Activated CD8-positive, alpha-beta T cell treated with anti-CD3 and anti-CD28 coated beads, Interleukin-2, amount 10 ng/mL, durations not matched to agents 7 days and 5 days (primary cell): ENCODE measurements at regions of chr20 and their contacts with region 1.

Region 1: DNA sequence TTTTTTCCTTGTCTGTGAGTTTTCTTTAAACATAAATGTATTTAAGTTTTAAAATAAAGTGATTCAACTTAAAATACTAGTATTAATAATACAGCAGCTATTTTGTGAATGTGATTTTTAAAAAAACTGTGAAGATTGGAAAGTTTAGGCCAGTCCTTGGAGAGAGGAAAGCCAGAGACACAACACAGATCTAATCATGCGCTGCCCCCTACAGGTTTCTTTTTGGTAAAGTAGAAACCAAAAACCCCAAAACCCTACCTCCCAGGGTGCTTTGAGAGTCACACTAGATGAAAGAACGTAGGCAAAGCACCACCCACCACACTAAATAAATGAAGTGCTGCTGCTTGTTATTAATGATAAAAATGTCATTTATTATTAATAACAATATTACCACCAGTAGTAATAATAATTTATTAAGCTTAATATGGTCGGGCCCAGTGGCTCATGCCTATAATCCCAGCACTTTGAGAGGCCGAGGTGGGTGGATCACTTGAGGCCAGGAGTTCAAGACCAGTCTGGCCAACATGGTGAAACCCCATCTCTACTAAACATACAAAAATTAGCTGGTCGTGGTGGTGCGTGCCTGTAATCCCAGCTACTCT is 33.7 kb downstream of the SLC9A8 start:
- DNase-seq: peak; percentile 76
- ATAC-seq: peak; percentile 85
- H3K4me3 Mint-ChIP-seq: no peak overlapping the region
- H3K27ac Mint-ChIP-seq: no peak overlapping the region
- H3K4me1 Mint-ChIP-seq: peaks cover 9% of the 10 kb centered on the region
- H3K27me3 Mint-ChIP-seq: no peaks in the 10 kb centered on the region

Region 2: DNA sequence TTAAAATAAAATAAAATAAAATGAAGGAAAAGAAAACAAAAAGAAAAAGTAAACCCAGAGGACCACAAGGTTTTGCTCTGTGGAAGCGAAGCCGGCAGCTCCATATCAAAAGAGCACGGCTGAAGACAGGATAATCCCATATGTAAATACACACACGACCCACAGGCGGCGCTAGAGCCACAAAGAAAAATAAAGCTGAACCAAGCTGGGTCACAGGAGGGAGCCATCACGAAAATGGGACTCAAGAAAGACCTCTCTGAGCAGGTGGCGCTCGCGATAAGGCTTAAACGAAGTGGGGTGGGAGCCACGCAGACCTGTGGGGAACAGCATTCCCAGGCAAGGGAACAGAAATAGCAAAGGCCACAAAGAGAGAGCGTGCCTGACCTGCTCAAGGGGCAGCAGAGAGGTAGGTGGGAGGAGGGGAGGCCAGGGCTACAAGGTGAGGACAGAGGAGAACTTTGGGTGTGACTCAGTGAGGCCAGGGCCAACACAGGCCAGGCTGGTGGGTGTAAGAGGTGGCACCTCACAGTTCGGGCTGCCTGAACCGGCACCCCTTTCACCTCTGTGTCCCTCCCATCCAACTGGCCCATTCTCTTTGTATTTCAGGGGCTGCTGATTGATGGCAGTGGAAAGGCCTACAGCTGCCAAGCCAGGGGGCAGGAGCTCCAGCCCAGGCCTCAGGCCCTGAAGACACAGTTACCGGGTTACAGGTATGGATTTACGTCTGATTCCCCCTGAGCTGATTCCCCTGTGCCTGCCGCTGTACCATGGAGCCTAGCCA is 304.4 kb before region 1 on chr20:
- CTCF ChIA-PET with region 1: interaction called, 18 read pairs
- POLR2A ChIA-PET with region 1: no interaction called
- DNase-seq: peak; percentile 86
- ATAC-seq: peak; percentile 75
- H3K4me3 Mint-ChIP-seq: no peak overlapping the region
- H3K27ac Mint-ChIP-seq: peak overlapping the region; percentile 91
- H3K4me1 Mint-ChIP-seq: peaks cover 26% of the 10 kb centered on the region
- H3K27me3 Mint-ChIP-seq: no peaks in the 10 kb centered on the region

Region 3: GRCh38 chr20:49635166-49635565 is 211.1 kb before region 1 on chr20:
- CTCF ChIA-PET with region 1: interaction called, 11 read pairs
- POLR2A ChIA-PET with region 1: interaction called, 4 read pairs
- DNase-seq: no peak
- ATAC-seq: no peak
- H3K4me3 Mint-ChIP-seq: no peak overlapping the region
- H3K27ac Mint-ChIP-seq: no peak overlapping the region
- H3K4me1 Mint-ChIP-seq: peaks cover 3% of the 10 kb centered on the region
- H3K27me3 Mint-ChIP-seq: no peaks in the 10 kb centered on the region

Region 4: DNA sequence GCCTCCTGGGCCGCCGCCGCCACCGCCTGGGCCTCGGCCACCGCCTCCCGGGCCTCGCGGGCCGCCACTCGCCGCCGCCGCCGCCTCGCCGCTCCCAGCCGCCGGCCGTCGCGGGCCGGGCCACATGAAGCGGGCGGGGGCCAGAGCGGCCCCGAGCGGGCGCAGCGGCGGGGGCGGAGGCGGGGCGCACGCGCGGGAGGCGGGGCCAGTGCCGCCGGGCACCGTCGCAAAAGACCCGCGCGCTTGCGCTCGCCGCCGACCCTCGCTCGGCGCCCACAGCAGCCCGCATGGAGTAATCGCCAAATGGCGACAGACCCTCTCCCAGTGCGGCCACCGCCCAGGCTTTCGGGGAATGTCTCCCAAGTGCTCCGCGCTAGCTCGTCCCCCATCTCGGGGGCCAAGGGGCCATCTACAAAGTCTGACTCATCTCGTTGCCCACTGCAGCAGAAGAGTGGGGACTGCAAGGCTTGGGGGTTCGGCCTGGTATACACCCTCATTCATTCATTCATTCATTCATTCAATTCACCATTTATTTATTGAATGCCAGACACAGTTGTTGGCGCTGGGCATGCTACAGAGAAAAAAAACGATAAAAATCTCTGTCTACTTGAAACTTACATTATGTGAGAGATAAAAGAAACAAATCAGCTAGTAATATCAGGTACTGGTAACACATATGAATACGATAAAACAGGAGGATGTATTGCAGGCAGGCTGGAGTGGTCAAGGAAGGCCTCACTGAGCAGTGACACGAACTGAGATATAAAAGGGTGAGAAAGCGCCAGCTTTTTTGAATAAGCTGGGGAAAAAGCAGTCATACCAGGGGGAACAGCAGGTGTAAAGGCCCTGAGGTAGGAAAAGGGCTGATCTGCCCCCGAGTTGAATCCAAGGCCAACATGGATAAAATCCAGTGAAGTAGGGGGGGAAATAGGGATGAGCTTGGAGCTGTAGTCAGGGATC is 132.3 kb before region 1 on chr20 and contains the start of gene B4GALT5:
- CTCF ChIA-PET with region 1: interaction called, 19 read pairs
- POLR2A ChIA-PET with region 1: no interaction called
- DNase-seq: peak; percentile 65
- ATAC-seq: peak; percentile 92
- H3K4me3 Mint-ChIP-seq: peak within 1 kb of the TSS; percentile 81
- H3K27ac Mint-ChIP-seq: peak within 1 kb of the TSS; percentile 78
- H3K4me1 Mint-ChIP-seq: peaks cover 26% of the 10 kb centered on the region
- H3K27me3 Mint-ChIP-seq: no peaks in the 10 kb centered on the region
- total RNA-seq, gene B4GALT5: 13.3 to 13.4 TPM

Region 5: DNA sequence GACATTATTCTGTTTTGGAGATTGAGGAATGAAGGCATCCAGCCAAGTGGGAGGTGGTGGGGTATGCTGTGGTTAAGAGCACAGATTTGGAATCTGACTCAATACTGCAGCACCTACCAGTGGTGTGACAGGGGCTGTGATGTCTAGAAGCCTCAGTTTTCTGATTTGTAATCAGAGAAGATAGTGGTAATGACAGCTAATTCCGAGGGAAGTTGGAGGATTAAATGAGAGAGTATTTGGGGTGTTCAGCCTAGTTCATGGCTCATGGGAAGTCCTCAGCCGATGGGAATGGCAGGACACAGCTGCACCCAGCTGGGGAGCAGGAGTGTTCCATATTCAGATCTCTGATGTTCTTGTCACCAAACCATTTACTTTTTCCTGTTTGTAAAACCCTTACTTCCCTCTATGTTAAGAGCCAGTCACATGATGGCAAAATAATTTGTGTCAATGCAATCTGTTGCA is 24.4 kb before region 1 on chr20:
- CTCF ChIA-PET with region 1: interaction called, 35 read pairs
- POLR2A ChIA-PET with region 1: no interaction called
- DNase-seq: no peak
- ATAC-seq: no peak
- H3K4me3 Mint-ChIP-seq: no peak overlapping the region
- H3K27ac Mint-ChIP-seq: peak overlapping the region; percentile 44
- H3K4me1 Mint-ChIP-seq: peaks cover 40% of the 10 kb centered on the region
- H3K27me3 Mint-ChIP-seq: no peaks in the 10 kb centered on the region